ENCODE measurements at regions of chr20 and their contacts with region 1.

Region 1: DNA sequence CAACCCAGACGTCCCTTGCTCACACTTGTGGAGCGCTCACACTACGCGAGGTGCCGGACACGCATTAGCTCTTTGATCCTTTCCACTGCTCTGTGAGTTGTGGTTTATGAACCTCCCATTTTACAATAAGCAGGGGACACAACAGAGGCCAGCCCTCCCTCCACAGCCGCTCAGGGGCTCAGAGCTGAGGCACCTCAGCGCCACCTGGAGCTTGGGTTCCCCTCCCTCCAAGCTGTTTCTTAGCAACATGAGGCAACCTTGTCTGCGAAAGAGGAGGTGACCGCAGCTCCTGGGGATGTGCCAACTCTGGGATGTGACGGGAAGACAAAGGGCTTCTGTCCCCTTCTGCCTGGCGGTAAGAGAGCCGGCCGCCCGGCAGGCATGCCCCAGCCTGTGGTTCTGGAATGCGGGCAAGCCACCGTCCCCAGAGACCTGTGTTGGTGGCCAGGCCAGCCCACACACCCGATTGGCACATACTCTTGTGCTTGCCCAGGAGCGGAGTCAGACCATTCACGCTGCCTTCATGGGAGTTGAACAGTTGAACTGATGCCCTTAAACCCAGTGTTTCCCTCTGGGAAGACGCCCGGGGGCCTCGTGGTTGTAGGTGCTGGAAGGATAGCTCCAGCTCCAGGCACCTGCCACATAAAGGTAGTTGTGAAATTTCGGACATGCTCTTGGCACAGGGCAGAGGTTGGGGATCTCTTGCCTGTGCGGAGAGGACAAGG is 44.5 kb downstream of the RBM38 start:
- DNase-seq: no peak

Region 2: DNA sequence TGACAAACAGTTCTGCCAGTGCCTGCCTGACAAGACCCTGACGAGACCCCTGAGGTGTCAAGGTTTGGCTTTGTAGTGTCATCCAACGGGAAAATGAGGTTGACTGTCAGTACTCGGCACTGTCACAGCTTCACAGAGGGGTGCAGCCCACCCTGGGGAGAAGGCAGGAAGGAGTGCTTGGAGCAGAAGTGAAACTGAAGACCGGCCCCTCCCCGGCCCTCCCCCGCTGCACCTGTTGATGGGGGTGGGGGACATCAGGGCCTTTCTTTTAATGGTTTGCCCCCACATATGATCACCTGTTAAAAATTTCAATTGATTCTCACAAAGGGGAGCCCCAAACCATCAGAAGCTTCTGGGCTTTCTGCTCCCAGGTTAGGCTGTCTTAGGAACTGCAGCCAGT is 267.4 kb after region 1 on chr20:
- intact Hi-C with region 1: loop called in 1 of 2 experiments (anchors 5 kb)
- DNase-seq: no peak

Measured in posterior vena cava (tissue), 2 donors.